Common myeloid progenitor, CD34-positive (primary cell): ENCODE measurements at regions of chr11 and their contacts with region 1.

Region 1: GRCh38 chr11:114059278-114059983 is at the start of gene ZBTB16:
- DNase-seq: peak; percentile 89 to 95 (median 91)
- H3K4me3 ChIP-seq: peak within 1 kb of the TSS; percentile 72 to 95 (median 90)
- H3K27ac ChIP-seq: peak within 1 kb of the TSS; percentile 61 to 78
- H3K4me1 ChIP-seq: peaks cover 2 to 50% (median 41%) of the 10 kb centered on the region in 4 experiments
- H3K27me3 ChIP-seq: peaks cover 0 to 19% (median 2%) of the 10 kb centered on the region in 5 experiments

Region 2: DNA sequence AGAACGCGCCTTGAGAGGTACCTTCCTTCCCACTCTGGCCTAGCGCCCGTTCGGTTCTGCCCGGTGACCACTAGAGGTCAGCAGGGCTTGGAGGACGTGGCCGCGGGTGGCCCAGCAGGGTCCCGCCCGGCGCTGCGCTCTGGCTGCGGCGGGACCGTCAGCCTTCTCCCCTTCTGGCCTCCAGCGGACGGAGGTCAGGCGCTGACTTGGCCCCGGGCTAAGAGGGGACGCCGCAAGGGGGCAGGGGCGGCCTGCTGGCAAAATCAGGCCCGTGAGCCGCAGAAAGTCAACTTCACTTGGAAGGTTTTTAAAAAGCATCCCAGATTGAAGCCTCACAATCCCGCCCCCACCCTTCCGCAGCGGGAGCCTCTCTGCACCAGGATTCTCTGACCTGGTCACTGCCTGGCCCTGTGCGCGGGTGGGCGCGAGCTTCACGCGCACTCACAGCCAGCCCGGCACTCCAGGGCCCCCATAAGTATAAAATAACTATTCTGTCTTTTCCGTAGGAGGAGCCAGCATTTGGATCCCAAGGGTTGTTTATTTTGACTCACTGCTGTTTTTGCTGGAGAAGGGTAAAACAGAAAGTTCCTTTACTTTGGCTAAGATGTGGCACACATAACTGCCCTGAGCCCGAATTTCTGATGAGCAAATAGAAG is 23.1 kb before region 1 on chr11:
- CTCF ChIA-PET with region 1: interaction called, 58 read pairs
- POLR2A ChIA-PET with region 1: no interaction called
- DNase-seq: peak; percentile 73 to 76 (median 75)
- H3K4me3 ChIP-seq: peak overlapping the region in 4 of 7 experiments; percentile 6 to 66 (median 37)
- H3K27ac ChIP-seq: no peak overlapping the region
- H3K4me1 ChIP-seq: peaks cover 0 to 9% (median 6%) of the 10 kb centered on the region in 4 experiments
- H3K27me3 ChIP-seq: peaks cover 0 to 4% (median 0%) of the 10 kb centered on the region in 5 experiments

Region 3: GRCh38 chr11:114073828-114074381 is 14.5 kb after region 1 on chr11:
- CTCF ChIA-PET with region 1: interaction called, 25 read pairs
- POLR2A ChIA-PET with region 1: interaction called, 5 read pairs
- DNase-seq: peak in 2 of 3 donors; percentile 69 to 79
- H3K4me3 ChIP-seq: peak overlapping the region in 2 of 7 experiments; percentile 2 to 24
- H3K27ac ChIP-seq: peak overlapping the region in 1 of 2 experiments; percentile 60
- H3K4me1 ChIP-seq: peaks cover 30 to 81% (median 67%) of the 10 kb centered on the region in 4 experiments
- H3K27me3 ChIP-seq: no peaks in the 10 kb centered on the region

Region 4: DNA sequence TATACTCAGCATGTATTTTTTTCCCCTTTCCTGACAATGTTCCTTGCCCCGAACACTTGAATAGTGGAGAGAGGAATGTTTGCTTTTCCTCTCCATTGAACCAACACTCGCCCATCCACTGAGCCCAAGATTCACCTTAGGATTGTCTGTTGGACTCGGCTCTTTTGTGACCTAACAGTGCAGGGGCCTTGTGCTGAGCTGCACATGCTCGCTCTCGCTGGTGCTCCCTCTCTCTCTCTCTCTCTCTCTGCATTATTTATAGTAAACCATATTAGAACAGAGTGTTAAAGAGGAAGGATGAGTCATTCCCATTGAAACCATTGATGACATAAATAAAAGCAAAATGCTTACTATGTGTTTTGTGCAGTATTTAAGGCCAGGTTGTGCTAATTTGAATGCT is 20.8 kb after region 1 on chr11:
- CTCF ChIA-PET with region 1: interaction called, 31 read pairs
- POLR2A ChIA-PET with region 1: interaction called, 42 read pairs
- DNase-seq: peak; percentile 65 to 87 (median 79)
- H3K4me3 ChIP-seq: no peak overlapping the region
- H3K27ac ChIP-seq: peak overlapping the region; percentile 92 to 95
- H3K4me1 ChIP-seq: peaks cover 44 to 97% (median 93%) of the 10 kb centered on the region in 4 experiments
- H3K27me3 ChIP-seq: no peaks in the 10 kb centered on the region

Region 5: GRCh38 chr11:114110952-114111947 is 51.8 kb after region 1 on chr11:
- CTCF ChIA-PET with region 1: interaction called, 11 read pairs
- POLR2A ChIA-PET with region 1: no interaction called
- DNase-seq: peak; percentile 71 to 89 (median 82)
- H3K4me3 ChIP-seq: peak overlapping the region in 6 of 7 experiments; percentile 9 to 74 (median 44)
- H3K27ac ChIP-seq: peak overlapping the region; percentile 43 to 72
- H3K4me1 ChIP-seq: peaks cover 25 to 52% (median 43%) of the 10 kb centered on the region in 4 experiments
- H3K27me3 ChIP-seq: no peaks in the 10 kb centered on the region

Region 6: DNA sequence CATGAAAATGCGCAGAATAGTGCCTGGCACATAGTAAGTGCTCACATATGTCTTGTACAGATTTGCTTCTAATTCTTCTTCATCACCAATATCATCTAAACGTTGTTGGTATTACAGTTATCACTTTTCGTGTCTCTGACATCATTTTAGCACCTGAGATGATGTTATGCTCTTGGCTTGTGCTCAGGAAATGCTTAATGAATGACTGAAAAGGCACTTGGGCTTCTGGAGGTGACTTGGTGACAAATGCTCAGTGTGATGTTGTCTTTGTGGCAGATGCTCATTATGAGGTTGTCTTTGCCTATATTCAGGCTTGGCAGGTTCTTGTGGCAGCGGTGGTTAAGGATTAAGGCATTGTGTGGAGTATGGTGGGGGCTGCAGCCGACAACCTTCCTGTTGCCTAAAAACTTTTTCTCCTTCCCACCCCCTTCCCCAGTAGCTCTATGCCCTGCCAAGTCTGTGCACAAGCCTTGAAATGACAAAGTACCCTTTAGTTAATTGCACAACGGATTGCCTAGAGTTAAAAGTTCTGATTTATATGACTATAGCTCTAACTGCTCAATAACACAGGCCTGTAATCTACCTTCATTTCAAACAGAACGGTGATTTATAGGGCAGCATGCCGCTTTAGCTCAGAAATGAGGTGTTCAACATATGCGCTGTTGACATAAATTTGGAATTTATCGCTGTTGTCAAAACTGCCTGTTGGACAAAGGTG is 82.6 kb after region 1 on chr11:
- CTCF ChIA-PET with region 1: interaction called, 12 read pairs
- POLR2A ChIA-PET with region 1: interaction called, 3 read pairs
- DNase-seq: no peak
- H3K4me3 ChIP-seq: no peak overlapping the region
- H3K27ac ChIP-seq: no peak overlapping the region
- H3K4me1 ChIP-seq: peaks cover 15 to 44% (median 34%) of the 10 kb centered on the region in 4 experiments
- H3K27me3 ChIP-seq: no peaks in the 10 kb centered on the region

Region 7: DNA sequence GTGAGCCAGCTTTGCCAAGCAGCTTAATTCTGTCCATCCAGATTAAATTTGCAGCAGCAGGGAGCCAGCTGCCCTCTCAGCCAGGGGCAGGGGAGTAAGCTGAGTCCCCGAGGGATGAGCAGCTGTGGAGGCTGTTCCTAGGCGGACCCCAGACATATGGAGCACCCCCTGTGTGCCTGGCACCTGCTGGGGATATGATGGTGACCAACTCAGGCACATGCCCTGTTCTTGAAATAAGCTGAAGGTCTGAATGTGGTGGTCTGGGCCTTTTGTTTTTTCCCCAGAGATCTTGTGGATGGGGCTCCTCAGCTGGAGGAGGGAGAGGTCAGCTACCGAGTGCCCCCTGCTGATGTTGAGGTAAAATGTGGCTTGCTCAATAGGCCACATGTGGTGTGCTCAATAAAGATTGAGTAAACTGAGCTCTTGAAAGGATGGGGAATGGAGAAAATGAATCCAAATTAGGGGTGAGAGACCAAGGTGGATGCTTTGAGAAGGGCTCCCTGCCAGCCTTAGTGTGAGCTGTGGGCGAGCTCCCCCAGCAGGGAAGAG is 133.5 kb after region 1 on chr11:
- CTCF ChIA-PET with region 1: interaction called, 20 read pairs
- POLR2A ChIA-PET with region 1: no interaction called
- DNase-seq: no peak
- H3K4me3 ChIP-seq: no peak overlapping the region
- H3K27ac ChIP-seq: no peak overlapping the region
- H3K4me1 ChIP-seq: peaks cover 2 to 20% (median 7%) of the 10 kb centered on the region in 4 experiments
- H3K27me3 ChIP-seq: no peaks in the 10 kb centered on the region